Activated CD4-positive, alpha-beta memory T cell treated with anti-CD3 and anti-CD28 coated beads for 36 hours (primary cell): ENCODE measurements at regions of chr4 and their contacts with region 1.

Region 1: DNA sequence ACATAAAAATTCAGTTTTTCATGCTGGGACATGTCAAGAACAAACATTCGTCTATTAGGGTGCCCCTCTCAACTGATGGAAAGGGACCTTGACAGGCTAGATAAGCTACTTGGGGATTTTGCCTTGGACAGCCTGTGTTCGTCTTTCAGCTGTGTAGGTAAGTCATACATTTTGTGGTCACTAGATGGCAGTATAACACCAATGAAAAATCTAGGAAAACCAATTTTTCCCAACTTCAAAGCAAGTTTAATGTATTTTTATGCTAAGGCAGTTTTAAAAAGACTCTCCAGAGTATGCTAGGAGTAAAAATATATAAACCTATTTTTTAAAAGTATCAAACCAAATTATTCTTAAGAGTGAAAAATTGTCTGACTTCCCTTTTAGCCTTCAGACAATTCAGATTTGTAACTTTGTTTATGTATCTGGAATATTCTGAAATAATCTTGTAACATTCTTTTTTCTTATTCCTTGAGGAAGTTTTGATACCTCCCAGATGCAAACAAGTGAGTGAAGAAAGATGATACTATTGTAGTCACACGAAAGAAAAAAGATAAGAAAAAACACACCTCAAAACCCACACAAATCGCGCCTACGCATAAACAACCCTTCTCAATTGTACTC is 158.3 kb downstream of the CPE start:
- DNase-seq: no peak
- H3K4me3 Mint-ChIP-seq: no peak overlapping the region
- H3K27ac Mint-ChIP-seq: no peak overlapping the region
- H3K4me1 Mint-ChIP-seq: no peaks in the 10 kb centered on the region
- H3K27me3 Mint-ChIP-seq: peaks cover 5% of the 10 kb centered on the region

Region 2: GRCh38 chr4:165464813-165465381 is 72.2 kb before region 1 on chr4:
- CTCF ChIA-PET with region 1: no interaction called
- POLR2A ChIA-PET with region 1: no interaction called
- intact Hi-C with region 1: no loop called
- DNase-seq: no peak
- H3K4me3 Mint-ChIP-seq: no peak overlapping the region
- H3K27ac Mint-ChIP-seq: no peak overlapping the region
- H3K4me1 Mint-ChIP-seq: no peaks in the 10 kb centered on the region
- H3K27me3 Mint-ChIP-seq: peaks cover 3% of the 10 kb centered on the region

Region 3: DNA sequence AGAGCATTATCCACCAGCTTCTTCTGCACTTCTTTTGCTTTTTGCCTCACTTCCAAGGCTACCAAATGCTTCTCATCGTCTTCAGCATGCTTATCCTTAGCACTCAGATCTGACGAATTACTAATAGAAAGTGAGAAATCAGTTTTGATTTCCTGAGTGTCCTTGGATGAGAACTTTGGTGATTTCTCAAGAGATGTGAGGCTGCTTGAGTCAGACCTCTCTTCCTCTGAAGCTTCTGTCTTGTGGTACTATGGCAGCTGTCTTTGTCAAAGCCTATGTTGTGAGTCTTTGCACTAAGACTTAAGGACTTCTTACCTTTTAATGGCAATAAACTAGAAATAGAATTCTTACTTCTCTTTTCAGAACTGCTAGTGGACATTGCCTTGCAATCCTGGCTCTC is 11.6 kb after region 1 on chr4:
- CTCF ChIA-PET with region 1: interaction called, 7 read pairs
- POLR2A ChIA-PET with region 1: no interaction called
- intact Hi-C with region 1: loop called (anchors 1 kb)
- DNase-seq: no peak
- H3K4me3 Mint-ChIP-seq: no peak overlapping the region
- H3K27ac Mint-ChIP-seq: no peak overlapping the region
- H3K4me1 Mint-ChIP-seq: peaks cover 13% of the 10 kb centered on the region
- H3K27me3 Mint-ChIP-seq: no peaks in the 10 kb centered on the region

Region 4: GRCh38 chr4:166091912-166092510 is 554.9 kb after region 1 on chr4:
- CTCF ChIA-PET with region 1: interaction called, 14 read pairs
- POLR2A ChIA-PET with region 1: no interaction called
- intact Hi-C with region 1: loop called (anchors 1 kb)
- DNase-seq: no peak
- H3K4me3 Mint-ChIP-seq: no peak overlapping the region
- H3K27ac Mint-ChIP-seq: no peak overlapping the region
- H3K4me1 Mint-ChIP-seq: no peaks in the 10 kb centered on the region
- H3K27me3 Mint-ChIP-seq: no peaks in the 10 kb centered on the region